CD14-positive monocyte (primary cell): ENCODE measurements at regions of chr18 and their contacts with region 1.

Region 1: GRCh38 chr18:48834413-48835031 is 116.2 kb downstream of the SMAD7 start:
- DNase-seq: peak; percentile 98 to 100 (median 99)
- H3K4me3 ChIP-seq: peak overlapping the region in 1 of 3 experiments; percentile 36
- H3K4me3 Mint-ChIP-seq: peak overlapping the region; percentile 70 to 74
- H3K27ac ChIP-seq: peak overlapping the region; percentile 58 to 81
- H3K27ac Mint-ChIP-seq: peak overlapping the region; percentile 87 to 95 (median 93)
- H3K4me1 ChIP-seq: peaks cover 43 to 63% of the 10 kb centered on the region in 2 donors
- H3K4me1 Mint-ChIP-seq: peaks cover 53% of the 10 kb centered on the region
- H3K27me3 ChIP-seq: no peaks in the 10 kb centered on the region
- H3K27me3 Mint-ChIP-seq: peaks cover 3 to 12% (median 10%) of the 10 kb centered on the region in 3 donors
- CTCF ChIP-seq: no peak

Region 2: GRCh38 chr18:48563043-48563442 is 271.5 kb before region 1 on chr18:
- intact Hi-C with region 1: no loop called
- DNase-seq: no peak
- H3K4me3 ChIP-seq: no peak overlapping the region
- H3K4me3 Mint-ChIP-seq: no peak overlapping the region
- H3K27ac ChIP-seq: no peak overlapping the region
- H3K27ac Mint-ChIP-seq: peak overlapping the region in 1 of 7 donors; percentile 64
- H3K4me1 ChIP-seq: peaks cover 0 to 13% of the 10 kb centered on the region in 2 donors
- H3K4me1 Mint-ChIP-seq: peaks cover 19% of the 10 kb centered on the region
- H3K27me3 ChIP-seq: no peaks in the 10 kb centered on the region
- H3K27me3 Mint-ChIP-seq: peaks cover 0 to 3% (median 0%) of the 10 kb centered on the region in 3 donors
- CTCF ChIP-seq: no peak

Region 3: GRCh38 chr18:48785091-48785614 is 49.4 kb before region 1 on chr18:
- intact Hi-C with region 1: loop called (anchors 2 to 10 kb)
- DNase-seq: peak; percentile 82 to 91 (median 88)
- H3K4me3 ChIP-seq: peak overlapping the region in 1 of 3 experiments; percentile 39
- H3K4me3 Mint-ChIP-seq: peak overlapping the region; percentile 25 to 78
- H3K27ac ChIP-seq: peak overlapping the region; percentile 81 to 93
- H3K27ac Mint-ChIP-seq: peak overlapping the region; percentile 90 to 97 (median 96)
- H3K4me1 ChIP-seq: peaks cover 75 to 84% of the 10 kb centered on the region in 2 donors
- H3K4me1 Mint-ChIP-seq: peaks cover 79% of the 10 kb centered on the region
- H3K27me3 ChIP-seq: no peaks in the 10 kb centered on the region
- H3K27me3 Mint-ChIP-seq: peaks cover 3 to 16% (median 13%) of the 10 kb centered on the region in 3 donors
- CTCF ChIP-seq: no peak

Region 4: GRCh38 chr18:48813833-48814489 is 20.6 kb before region 1 on chr18:
- intact Hi-C with region 1: loop called in 1 of 2 experiments (anchors 2 kb)
- DNase-seq: peak; percentile 70 to 88 (median 84)
- H3K4me3 ChIP-seq: peak overlapping the region in 1 of 3 experiments; percentile 43
- H3K4me3 Mint-ChIP-seq: peak overlapping the region in 1 of 2 donors; percentile 60
- H3K27ac ChIP-seq: peak overlapping the region; percentile 49 to 87
- H3K27ac Mint-ChIP-seq: peak overlapping the region; percentile 81 to 93 (median 91)
- H3K4me1 ChIP-seq: peaks cover 21 to 35% of the 10 kb centered on the region in 2 donors
- H3K4me1 Mint-ChIP-seq: peaks cover 35% of the 10 kb centered on the region
- H3K27me3 ChIP-seq: no peaks in the 10 kb centered on the region
- H3K27me3 Mint-ChIP-seq: peaks cover 0 to 6% (median 0%) of the 10 kb centered on the region in 3 donors
- CTCF ChIP-seq: no peak

Region 5: GRCh38 chr18:48868468-48869466 is 34.2 kb after region 1 on chr18:
- intact Hi-C with region 1: loop called in 1 of 2 experiments (anchors 5 kb)
- DNase-seq: peak; percentile 87 to 92 (median 87)
- H3K4me3 ChIP-seq: no peak overlapping the region
- H3K4me3 Mint-ChIP-seq: no peak overlapping the region
- H3K27ac ChIP-seq: peak overlapping the region in 1 of 2 donors; percentile 45
- H3K27ac Mint-ChIP-seq: peak overlapping the region; percentile 1 to 83 (median 66)
- H3K4me1 ChIP-seq: peaks cover 15 to 24% of the 10 kb centered on the region in 2 donors
- H3K4me1 Mint-ChIP-seq: peaks cover 27% of the 10 kb centered on the region
- H3K27me3 ChIP-seq: no peaks in the 10 kb centered on the region
- H3K27me3 Mint-ChIP-seq: peaks cover 3 to 9% (median 6%) of the 10 kb centered on the region in 3 donors
- CTCF ChIP-seq: no peak

Region 6: DNA sequence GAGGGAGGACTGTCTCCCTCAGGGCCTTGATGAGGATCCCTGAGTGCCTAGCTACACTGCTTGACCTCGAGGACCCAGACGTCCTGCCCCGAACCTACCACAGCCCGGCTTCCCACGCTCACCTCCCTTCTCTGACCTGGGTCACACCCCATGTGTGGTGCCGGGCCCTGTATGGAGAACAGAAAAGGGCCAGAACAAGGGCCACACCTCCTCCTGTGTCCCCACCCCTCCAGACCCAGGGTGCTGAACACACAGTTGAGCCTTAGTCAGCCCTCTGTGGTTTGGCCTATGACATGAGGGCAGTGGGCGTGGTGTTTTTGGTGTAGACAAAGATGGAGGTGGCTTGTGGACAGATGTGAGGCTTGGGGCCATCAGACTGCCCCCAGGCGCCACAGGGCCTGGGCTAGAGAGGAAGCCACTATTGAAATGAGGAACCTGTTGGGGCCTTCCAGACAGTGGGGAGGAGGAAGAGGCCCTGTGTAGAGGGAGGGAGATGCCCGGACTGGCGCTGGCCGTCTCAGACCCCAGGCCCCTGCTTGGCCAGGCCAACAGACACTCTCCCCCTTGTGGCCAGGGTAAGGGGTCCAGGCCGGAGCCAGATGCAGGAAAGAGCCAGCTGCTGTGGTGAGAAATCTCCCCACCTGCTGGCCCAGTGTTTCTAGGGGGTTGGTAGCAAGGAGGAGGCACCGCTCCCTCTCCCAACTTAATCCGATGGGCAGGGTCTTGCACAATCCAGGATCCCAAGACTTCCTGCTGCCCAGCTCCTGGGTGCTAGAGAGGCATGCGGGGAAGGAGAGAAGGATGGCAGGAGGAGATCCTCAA is 62.4 kb after region 1 on chr18:
- intact Hi-C with region 1: loop called in 1 of 2 experiments (anchors 2 kb)
- DNase-seq: peak; percentile 99 to 100 (median 100)
- H3K4me3 ChIP-seq: peak overlapping the region in 1 of 3 experiments; percentile 50
- H3K4me3 Mint-ChIP-seq: peak overlapping the region; percentile 56 to 74
- H3K27ac ChIP-seq: peak overlapping the region; percentile 90 to 93
- H3K27ac Mint-ChIP-seq: peak overlapping the region; percentile 93 to 99 (median 97)
- H3K4me1 ChIP-seq: peaks cover 43 to 47% of the 10 kb centered on the region in 2 donors
- H3K4me1 Mint-ChIP-seq: peaks cover 48% of the 10 kb centered on the region
- H3K27me3 ChIP-seq: no peaks in the 10 kb centered on the region
- H3K27me3 Mint-ChIP-seq: no peaks in the 10 kb centered on the region
- CTCF ChIP-seq: peak; percentile 55